Left cardiac atrium (tissue), 4 donors: ENCODE measurements at regions of chr15 and their contacts with region 1.

Region 1: GRCh38 chr15:35545824-35546510 is at the start of gene DPH6:
- DNase-seq: peak; percentile 92
- ATAC-seq: peak; percentile 94 to 96
- total RNA-seq, gene DPH6: 9.9 to 16.5 TPM

Region 2: DNA sequence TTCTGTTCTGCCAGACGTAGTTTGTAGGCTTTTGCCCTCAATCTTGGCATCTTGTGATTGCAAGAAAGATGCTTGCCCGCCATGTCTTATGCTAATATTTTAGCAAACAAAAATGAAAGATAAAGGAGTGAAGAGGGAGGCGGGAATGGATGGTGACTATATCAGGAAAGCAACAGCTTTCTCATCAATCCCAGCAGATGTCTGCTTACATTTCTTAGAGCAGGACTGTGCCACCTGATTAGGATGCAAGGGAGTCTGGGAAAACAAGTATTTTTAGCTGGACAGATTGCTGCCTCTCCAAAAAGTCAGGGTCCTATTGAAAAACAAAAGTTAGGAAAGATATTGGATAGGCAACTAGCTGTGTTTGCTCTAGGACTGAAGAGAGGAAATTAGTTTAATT is 34.6 kb after region 1 on chr15:
- intact Hi-C with region 1: no loop called
- DNase-seq: no peak
- ATAC-seq: no peak

Region 3: GRCh38 chr15:35665896-35666536 is 120.0 kb after region 1 on chr15:
- intact Hi-C with region 1: loop called in 1 of 2 experiments (anchors 5 kb)
- DNase-seq: peak; percentile 73
- ATAC-seq: peak; percentile 91 to 92

Region 4: GRCh38 chr15:35690698-35691116 is 144.7 kb after region 1 on chr15:
- intact Hi-C with region 1: loop called (anchors 5 to 10 kb)
- DNase-seq: peak; percentile 27
- ATAC-seq: peak; percentile 92 to 93

Region 5: GRCh38 chr15:35697549-35698299 is 151.8 kb after region 1 on chr15:
- intact Hi-C with region 1: loop called (anchors 5 to 10 kb)
- DNase-seq: peak; percentile 55
- ATAC-seq: peak; percentile 74 to 84